ENCODE measurements at regions of chr11 and their contacts with region 1.

Region 1: GRCh38 chr11:118198370-118198769 is 21.9 kb upstream of the SCN2B start:
- DNase-seq: peak; percentile 75 to 91
- ATAC-seq: peak; percentile 33

Region 2: DNA sequence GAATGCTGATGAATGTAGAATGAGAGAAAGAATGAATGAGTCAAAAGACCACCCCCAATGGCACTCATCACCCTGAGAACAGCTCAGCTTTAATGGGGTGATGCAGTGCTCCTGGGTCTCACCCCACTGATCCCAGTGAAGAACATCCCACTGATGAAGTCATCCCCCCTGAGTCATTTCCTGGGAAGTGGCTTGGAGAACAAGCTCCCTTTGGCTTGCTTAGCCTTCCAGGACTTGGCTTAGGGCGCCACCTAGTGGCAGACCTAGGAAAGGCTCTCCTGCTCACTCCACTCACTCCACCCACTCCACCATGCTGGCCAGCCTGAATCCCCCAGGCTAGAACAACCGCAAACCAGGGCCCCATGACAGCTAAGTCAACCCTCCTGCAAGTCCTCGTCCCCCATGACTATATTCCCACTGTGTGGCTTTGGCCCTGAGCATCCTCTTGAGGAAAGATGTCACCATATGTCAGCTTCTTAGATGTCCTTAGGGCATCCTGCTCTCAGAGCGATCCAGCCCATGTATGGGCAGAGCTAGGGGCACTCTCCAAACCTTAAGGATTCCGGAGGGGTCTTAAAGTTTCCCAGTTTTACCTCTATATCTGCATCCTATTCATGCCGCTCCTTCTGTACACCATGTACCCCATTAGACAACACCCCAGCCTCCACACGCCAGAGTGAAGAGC is 251.4 kb before region 1 on chr11:
- intact Hi-C with region 1: no loop called
- DNase-seq: peak; percentile 75 to 89
- ATAC-seq: peak; percentile 96

Region 3: GRCh38 chr11:118290923-118291322 is 92.6 kb after region 1 on chr11:
- intact Hi-C with region 1: loop called in 1 of 2 experiments (anchors 5 kb)
- DNase-seq: peak; percentile 45 to 53
- ATAC-seq: peak; percentile 89

Region 4: DNA sequence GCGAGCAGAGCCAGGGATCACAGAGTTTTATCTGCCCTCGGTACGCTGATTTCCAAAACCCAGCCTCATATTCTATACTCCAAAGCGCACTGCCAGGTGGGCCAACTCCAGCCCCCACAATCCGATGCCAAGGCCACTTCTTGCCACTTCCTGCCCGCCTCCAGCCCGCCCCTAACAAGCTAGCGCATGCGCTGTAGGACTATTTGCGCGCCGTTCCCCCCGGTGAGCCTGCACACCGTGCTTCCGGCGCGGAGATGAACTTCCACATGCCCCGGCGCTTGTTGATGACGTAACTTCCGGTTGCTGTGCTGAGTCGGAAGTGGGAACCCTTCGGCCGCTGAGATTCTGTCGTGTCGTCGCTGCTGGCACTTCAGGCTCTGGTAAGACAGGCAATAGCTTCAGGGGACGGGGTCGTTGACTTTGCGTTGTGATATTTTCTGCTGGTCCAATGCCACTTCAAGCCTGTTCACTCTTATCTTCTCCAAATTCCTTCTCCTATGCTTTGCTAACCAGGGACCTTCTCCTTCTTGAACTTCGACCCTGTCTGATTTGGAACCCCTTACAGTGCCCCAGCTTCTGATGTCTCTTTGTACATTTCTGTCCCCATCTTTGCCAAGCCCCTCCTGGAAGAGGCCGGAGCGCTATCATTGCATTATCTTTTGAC is 161.1 kb after region 1 on chr11 and contains the start of gene UBE4A:
- intact Hi-C with region 1: loop called in 1 of 2 experiments (anchors 10 kb)
- DNase-seq: peak; percentile 97 to 98
- ATAC-seq: peak; percentile 98
- total RNA-seq, gene UBE4A: 40.3 to 45.6 TPM

Region 5: DNA sequence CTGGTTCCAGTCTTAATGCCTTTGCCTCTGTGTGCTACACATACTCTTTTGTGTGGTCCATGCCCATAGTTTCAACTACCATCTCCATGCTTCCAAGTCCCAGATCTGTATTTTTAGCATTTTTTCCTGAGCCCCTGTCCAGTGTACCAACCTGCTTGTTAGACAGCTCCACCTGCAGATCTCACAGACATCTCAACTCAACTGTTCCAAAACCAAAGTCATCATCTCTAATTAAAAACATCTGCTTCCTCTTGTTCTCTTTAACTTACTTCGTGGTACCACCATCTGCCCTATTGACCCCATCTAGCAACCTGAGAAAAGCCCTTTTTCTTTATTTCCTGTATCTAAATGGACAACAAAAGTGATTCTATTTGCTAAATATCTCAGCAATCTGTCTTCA is 229.3 kb after region 1 on chr11:
- intact Hi-C with region 1: no loop called
- DNase-seq: no peak
- ATAC-seq: no peak

Region 6: GRCh38 chr11:118488480-118489109 is 290.2 kb after region 1 on chr11:
- intact Hi-C with region 1: loop called in 1 of 2 experiments (anchors 10 kb)
- DNase-seq: peak; percentile 34 to 48
- ATAC-seq: peak; percentile 74

Measured in left colon (tissue), 2 donors.